Activated CD4-positive, alpha-beta T cell treated with anti-CD3 and anti-CD28 coated beads, Interleukin-2, amount 10 ng/mL, durations not matched to agents 24 days and 14 days (primary cell): ENCODE measurements at regions of chr14 and their contacts with region 1.

Region 1: DNA sequence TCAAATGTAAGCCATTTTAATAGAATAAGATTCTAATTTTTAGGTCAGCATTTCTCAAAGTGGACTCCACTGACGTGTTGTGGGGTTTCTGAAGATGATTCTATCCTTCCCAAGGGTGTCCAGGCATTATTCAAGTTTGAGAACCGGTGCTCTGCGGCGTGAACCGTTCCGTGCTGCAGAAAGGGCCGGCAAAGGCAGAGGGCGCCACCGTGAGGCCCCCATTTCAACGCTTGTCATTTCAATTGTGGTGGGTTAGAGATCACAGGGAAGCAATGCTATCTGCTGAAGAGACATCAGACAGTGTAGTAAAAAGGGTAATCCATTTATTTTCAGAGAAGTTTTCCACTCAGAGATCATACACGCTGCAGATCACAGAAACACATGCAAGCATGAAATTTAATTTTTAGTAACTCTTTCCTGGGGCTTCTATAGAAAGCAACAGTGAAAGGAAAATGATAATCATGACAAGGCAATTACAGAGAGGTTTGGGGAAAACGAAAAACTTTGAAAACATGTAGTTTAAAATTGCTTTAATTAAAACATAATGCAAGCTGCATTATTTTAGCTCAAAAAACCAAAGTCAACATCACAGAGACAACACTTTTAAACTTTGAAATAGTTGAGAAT is 201.7 kb downstream of the EXOC5 start:
- DNase-seq: peak; percentile 74
- H3K4me3 Mint-ChIP-seq: no peak overlapping the region
- H3K27ac Mint-ChIP-seq: no peak overlapping the region
- H3K4me1 Mint-ChIP-seq: peaks cover 3% of the 10 kb centered on the region
- H3K27me3 Mint-ChIP-seq: peaks cover 47% of the 10 kb centered on the region

Region 2: GRCh38 chr14:56491299-56492285 is 575.4 kb before region 1 on chr14:
- intact Hi-C with region 1: loop called (anchors 2 kb)
- DNase-seq: peak; percentile 75
- H3K4me3 Mint-ChIP-seq: no peak overlapping the region
- H3K27ac Mint-ChIP-seq: no peak overlapping the region
- H3K4me1 Mint-ChIP-seq: peaks cover 6% of the 10 kb centered on the region
- H3K27me3 Mint-ChIP-seq: peaks cover 4% of the 10 kb centered on the region

Region 3: GRCh38 chr14:56810147-56810719 is 256.8 kb before region 1 on chr14 and contains the start of gene OTX2:
- intact Hi-C with region 1: loop called (anchors 5 kb)
- DNase-seq: no peak
- H3K4me3 Mint-ChIP-seq: peak within 1 kb of the TSS; percentile 10
- H3K27ac Mint-ChIP-seq: peak within 1 kb of the TSS; percentile 85
- H3K4me1 Mint-ChIP-seq: peaks cover 9% of the 10 kb centered on the region
- H3K27me3 Mint-ChIP-seq: peaks cover 78% of the 10 kb centered on the region
- total RNA-seq, gene OTX2: not detected in 2 replicates

Region 4: GRCh38 chr14:57704763-57705162 is 637.8 kb after region 1 on chr14:
- intact Hi-C with region 1: no loop called
- DNase-seq: no peak
- H3K4me3 Mint-ChIP-seq: no peak overlapping the region
- H3K27ac Mint-ChIP-seq: no peak overlapping the region
- H3K4me1 Mint-ChIP-seq: no peaks in the 10 kb centered on the region
- H3K27me3 Mint-ChIP-seq: no peaks in the 10 kb centered on the region